H1 (cell line): ENCODE measurements at regions of chr5 and their contacts with region 1.

Region 1: DNA sequence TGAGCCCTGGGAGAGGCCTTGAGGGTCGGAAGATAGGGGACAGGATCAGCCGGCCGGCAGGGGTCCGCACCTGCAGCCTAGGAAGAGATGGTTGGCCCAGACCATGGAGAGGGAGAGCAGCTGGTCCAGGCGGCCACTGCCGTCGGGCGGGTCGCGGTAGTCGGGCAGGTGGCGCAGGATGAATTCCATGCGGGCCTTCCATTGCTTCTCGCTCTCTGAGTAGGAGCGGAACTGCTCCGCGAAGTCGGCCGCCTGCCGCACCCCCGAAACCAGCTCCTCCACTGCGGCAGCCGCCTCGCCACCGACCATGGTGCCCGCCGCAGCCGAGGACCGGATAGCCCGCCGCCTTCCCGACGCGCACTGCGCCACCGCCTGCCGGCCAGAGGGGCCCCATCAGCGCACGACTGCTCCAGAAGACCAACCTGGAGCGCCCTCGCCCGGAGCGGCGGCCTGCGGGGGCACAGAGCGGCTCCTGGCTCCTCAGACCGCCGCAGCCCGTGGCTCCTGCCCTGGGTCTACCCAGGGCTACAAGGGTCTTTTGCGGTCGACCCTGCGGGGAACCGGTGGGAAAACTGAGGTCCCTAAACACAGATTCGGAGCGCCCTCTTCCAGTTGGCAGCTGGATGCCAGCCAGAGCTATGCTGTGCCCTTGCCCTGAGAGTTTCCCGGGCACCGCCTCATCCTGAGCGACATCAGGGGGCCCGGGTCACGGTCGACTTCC is at the start of gene CDKN2AIPNL:
- DNase-seq: peak; percentile 59 to 95
- H3K4me3 ChIP-seq: peak within 1 kb of the TSS; percentile 75 to 97 (median 86)
- H3K27ac ChIP-seq: peak within 1 kb of the TSS; percentile 73
- H3K4me1 ChIP-seq: peaks cover 5 to 10% (median 8%) of the 10 kb centered on the region in 4 experiments
- H3K27me3 ChIP-seq: no peaks in the 10 kb centered on the region
- CTCF ChIP-seq: peak; percentile 73 to 94 (median 78)
- EP300 ChIP-seq: peak in 1 of 2 experiments; percentile 78; a peak in 1 of 3 replicates
- POLR2A ChIP-seq: peak; percentile 84 to 94
- RAD21 ChIP-seq: peak; percentile 52 to 74
- total RNA-seq, gene CDKN2AIPNL: 54.3 and 56.3 TPM in 2 replicates

Region 2: DNA sequence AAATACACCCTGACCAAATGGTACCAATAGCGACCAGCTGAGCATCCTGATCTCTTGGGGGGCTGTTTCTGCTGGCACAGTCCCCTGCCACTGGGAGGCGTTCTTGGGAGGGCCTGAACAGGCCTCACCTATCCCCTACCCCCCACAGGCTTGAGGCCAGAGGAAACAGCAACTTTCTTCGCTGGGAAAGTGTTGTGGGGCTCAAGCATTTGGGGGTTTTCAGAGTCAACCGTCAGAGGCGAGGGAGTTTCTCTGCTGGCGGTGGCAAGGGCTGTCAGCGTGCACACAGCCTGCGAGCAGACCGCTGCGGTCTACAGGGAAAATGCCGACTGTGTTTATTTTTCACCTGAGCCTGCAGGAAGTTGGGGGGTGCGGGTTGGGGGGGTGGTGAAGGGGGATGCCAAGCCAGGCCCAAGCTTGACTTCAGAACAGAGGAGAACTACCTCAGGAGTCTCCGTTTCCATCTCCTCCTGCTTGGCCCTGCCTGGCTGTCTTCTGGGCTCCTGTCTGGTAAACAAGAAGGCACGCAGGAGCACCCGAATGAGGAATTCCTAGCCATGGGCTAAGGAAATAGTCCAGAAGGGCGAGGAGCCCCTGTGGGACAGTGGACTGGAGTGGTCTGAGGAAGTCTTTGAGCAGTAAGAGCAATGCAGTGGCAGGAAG is 279.2 kb before region 1 on chr5:
- CTCF ChIA-PET with region 1: no interaction called
- POLR2A ChIA-PET with region 1: no interaction called
- DNase-seq: peak in 1 of 2 experiments; percentile 68
- H3K4me3 ChIP-seq: no peak overlapping the region
- H3K27ac ChIP-seq: no peak overlapping the region
- H3K4me1 ChIP-seq: peaks cover 0 to 5% (median 2%) of the 10 kb centered on the region in 4 experiments; a peak in 3 of 7 replicates
- H3K27me3 ChIP-seq: no peaks in the 10 kb centered on the region
- CTCF ChIP-seq: peak in 2 of 3 experiments; percentile 68 to 76; a peak in 3 of 4 replicates
- EP300 ChIP-seq: no peak
- POLR2A ChIP-seq: no peak
- RAD21 ChIP-seq: peak; percentile 51 to 68

Region 3: GRCh38 chr5:134249469-134250379 is 162.0 kb before region 1 on chr5:
- CTCF ChIA-PET with region 1: no interaction called
- POLR2A ChIA-PET with region 1: no interaction called
- DNase-seq: no peak
- H3K4me3 ChIP-seq: no peak overlapping the region
- H3K27ac ChIP-seq: no peak overlapping the region
- H3K4me1 ChIP-seq: peaks cover 8 to 17% (median 15%) of the 10 kb centered on the region in 4 experiments; a peak in 6 of 7 replicates
- H3K27me3 ChIP-seq: no peaks in the 10 kb centered on the region; a peak in 1 of 7 replicates
- CTCF ChIP-seq: no peak
- EP300 ChIP-seq: no peak
- POLR2A ChIP-seq: no peak
- RAD21 ChIP-seq: no peak

Region 4: DNA sequence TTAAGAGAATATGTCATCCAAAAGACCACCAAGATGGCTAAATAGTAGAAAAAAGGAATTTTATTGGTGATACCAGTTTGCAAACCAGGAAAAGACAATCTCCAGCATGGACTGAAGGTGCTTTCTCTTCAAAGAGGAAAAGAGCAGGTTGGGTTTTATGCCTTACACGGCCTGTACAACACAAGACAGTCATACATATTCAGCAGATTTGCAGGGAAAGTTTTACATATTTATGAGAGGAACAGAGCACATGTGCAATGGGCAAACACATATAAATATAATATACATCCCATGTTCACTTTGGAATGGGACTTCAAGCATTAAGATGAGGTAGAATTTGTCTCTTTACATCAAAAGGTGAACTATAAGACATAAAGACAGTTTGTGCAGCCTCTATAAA is 115.5 kb before region 1 on chr5:
- CTCF ChIA-PET with region 1: no interaction called
- POLR2A ChIA-PET with region 1: no interaction called
- DNase-seq: no peak
- H3K4me3 ChIP-seq: no peak overlapping the region
- H3K27ac ChIP-seq: no peak overlapping the region
- H3K4me1 ChIP-seq: no peaks in the 10 kb centered on the region
- H3K27me3 ChIP-seq: no peaks in the 10 kb centered on the region
- CTCF ChIP-seq: no peak
- EP300 ChIP-seq: no peak
- POLR2A ChIP-seq: no peak
- RAD21 ChIP-seq: no peak

Region 5: DNA sequence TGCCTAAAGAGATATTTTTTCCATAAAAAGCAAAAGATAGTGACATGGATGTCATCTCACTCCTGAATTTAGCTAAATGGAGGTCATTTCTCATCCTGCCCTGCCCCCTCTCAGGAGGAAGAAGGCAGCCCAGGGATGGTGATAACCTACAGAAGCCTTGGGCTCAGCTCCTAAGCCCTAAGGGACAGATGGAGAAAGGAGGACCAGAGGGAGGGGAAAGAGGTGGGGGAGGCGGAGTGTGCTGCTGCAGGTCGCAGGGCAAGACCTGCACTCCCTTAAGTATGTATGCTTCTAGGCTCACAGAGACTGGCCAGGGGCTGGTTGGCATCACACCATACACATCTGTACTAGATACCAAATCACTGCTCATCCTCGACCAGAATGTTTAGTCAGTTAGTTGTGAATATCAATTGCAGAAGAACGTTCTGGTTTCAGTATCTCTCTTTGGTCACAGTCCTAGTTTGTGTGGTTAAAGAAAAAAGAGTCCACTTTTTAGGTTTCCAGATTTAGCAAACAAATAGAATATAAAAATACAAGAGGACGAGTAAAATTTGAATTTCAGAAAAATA is 18.4 kb after region 1 on chr5:
- CTCF ChIA-PET with region 1: interaction called, 91 read pairs
- POLR2A ChIA-PET with region 1: interaction called, 11 read pairs
- DNase-seq: no peak
- H3K4me3 ChIP-seq: peak overlapping the region in 1 of 4 experiments; percentile 44; a peak in 2 of 8 replicates
- H3K27ac ChIP-seq: no peak overlapping the region
- H3K4me1 ChIP-seq: peaks cover 6 to 27% (median 16%) of the 10 kb centered on the region in 4 experiments; a peak in 6 of 7 replicates
- H3K27me3 ChIP-seq: peaks cover 0 to 1% (median 0%) of the 10 kb centered on the region in 4 experiments; a peak in 1 of 7 replicates
- CTCF ChIP-seq: peak in 1 of 3 experiments; percentile 7; a peak in 1 of 4 replicates
- EP300 ChIP-seq: no peak
- POLR2A ChIP-seq: no peak
- RAD21 ChIP-seq: no peak; a peak in 1 of 4 replicates

Region 6: GRCh38 chr5:134458234-134459012 is 46.7 kb after region 1 on chr5:
- CTCF ChIA-PET with region 1: interaction called, 19 read pairs
- POLR2A ChIA-PET with region 1: interaction called, 3 read pairs
- DNase-seq: no peak
- H3K4me3 ChIP-seq: no peak overlapping the region
- H3K27ac ChIP-seq: no peak overlapping the region
- H3K4me1 ChIP-seq: peaks cover 0 to 4% (median 0%) of the 10 kb centered on the region in 4 experiments; a peak in 1 of 7 replicates
- H3K27me3 ChIP-seq: no peaks in the 10 kb centered on the region
- CTCF ChIP-seq: no peak
- EP300 ChIP-seq: no peak
- POLR2A ChIP-seq: no peak
- RAD21 ChIP-seq: no peak

Region 7: DNA sequence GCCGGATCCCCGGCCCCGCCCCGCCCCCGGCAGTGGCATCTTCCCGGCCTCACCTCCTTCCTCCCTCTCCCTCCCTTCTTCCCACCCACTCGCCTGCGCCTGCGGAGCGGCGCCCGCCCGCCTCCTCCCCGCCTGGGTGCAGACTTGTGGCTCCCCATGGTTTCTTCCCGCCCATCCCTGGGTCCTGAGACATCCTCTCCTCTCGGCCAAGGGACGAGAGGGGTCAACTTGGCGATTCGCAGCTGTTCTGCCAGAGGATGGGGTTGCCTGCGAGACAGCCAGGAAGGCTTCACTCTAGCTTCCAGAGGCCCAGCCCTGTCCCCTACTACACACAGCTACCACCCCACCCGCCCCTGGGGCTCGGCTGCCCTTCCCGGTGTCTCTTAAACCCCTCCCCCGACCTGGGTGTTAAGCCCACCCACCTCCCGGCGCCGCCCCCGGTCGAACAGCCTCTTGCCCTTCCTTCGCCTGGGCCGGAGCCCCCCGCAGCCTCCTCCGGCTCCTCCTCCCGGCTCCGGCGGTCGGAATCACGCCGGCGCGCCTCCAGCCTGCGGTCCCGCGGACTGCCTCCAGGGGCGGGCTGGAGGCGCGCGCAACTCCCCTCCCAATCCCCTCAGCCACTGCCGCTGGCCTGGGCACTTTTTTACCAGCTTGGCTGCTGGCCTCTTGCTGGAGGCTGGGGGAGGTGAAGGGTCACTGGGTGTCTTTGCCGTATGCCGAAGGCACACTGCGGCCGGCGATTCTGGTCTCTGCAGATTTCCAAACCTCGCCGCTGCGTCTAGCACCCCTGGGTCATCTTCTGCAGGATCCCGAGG is 115.6 kb after region 1 on chr5:
- CTCF ChIA-PET with region 1: interaction called, 17 read pairs
- POLR2A ChIA-PET with region 1: interaction called, 22 read pairs
- DNase-seq: peak; percentile 91 to 93
- H3K4me3 ChIP-seq: peak overlapping the region; percentile 68 to 85 (median 77)
- H3K27ac ChIP-seq: peak overlapping the region; percentile 62
- H3K4me1 ChIP-seq: peaks cover 21 to 38% (median 27%) of the 10 kb centered on the region in 4 experiments
- H3K27me3 ChIP-seq: no peaks in the 10 kb centered on the region
- CTCF ChIP-seq: peak in 2 of 3 experiments; percentile 76 to 81; a peak in 3 of 4 replicates
- EP300 ChIP-seq: no peak
- POLR2A ChIP-seq: no peak; a peak in 1 of 3 replicates
- RAD21 ChIP-seq: peak; percentile 58 to 75

Region 8: DNA sequence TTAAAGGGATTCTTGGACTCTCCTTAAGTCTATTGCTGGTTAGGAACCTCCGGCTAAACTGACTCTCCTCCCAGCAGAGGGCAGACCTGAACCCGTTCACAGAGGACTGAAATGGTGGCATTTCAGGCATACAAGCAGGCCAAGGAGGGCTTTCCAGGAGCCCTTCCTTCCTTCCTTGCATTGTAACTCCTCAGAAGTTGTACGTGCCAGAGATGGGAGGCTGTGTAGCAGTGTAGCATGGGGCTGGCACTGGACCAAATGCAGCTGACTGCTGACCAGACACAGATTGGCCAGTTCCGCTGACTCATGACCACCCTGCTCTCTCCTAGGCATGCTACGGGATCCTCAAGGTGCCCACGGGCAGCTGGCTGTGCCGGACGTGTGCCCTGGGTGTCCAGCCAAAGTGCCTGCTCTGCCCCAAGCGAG is 150.2 kb after region 1 on chr5:
- CTCF ChIA-PET with region 1: interaction called, 13 read pairs
- POLR2A ChIA-PET with region 1: no interaction called
- DNase-seq: no peak
- H3K4me3 ChIP-seq: no peak overlapping the region
- H3K27ac ChIP-seq: no peak overlapping the region
- H3K4me1 ChIP-seq: no peaks in the 10 kb centered on the region
- H3K27me3 ChIP-seq: no peaks in the 10 kb centered on the region
- CTCF ChIP-seq: peak in 2 of 3 experiments; percentile 59 to 67; a peak in 3 of 4 replicates
- EP300 ChIP-seq: no peak
- POLR2A ChIP-seq: no peak
- RAD21 ChIP-seq: peak; percentile 46 to 69